ENCODE measurements at regions of chr17 and their contacts with region 1.

Region 1: DNA sequence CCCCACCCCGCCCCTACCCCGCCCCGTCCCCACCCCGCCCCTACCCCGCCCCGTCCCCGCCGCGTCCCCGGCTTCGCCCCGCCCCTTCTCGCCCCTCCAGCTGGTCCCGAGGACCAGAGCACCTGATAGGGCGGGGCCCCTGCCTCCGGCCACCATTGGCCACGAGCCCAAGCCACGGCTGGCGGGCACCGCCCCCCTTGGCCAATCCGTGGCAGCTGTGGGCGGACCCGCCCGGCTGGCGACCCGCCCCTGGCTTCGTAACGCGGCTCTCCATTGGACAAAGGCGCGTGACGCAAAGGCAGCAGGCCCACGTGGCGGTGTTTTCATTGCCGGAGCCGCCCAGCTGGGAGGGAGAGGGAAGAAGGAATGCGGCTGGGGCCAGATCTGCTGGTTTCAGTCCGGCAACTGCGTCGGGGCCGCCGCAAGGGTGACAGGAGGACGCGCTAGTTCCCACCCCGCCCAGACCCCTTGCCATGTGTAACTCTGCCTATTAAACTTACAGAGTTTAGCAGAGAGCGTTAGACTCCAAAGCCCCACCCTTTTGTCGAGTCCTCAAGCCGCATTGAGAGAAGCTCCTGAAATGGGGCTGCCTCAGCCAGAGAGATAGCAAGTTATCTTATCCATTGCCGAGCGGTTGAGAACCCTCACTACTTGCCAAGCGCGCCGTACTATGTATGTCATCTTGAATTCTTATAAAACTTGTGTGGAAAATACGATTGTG is 403 bp upstream of the WIPI1 start:
- DNase-seq: peak; percentile 99 to 100
- ATAC-seq: peak; percentile 72 to 88 (median 82)
- H3K4me3 ChIP-seq: peak overlapping the region; percentile 87
- H3K27ac ChIP-seq: peak overlapping the region; percentile 98
- H3K4me1 ChIP-seq: peaks cover 62% of the 10 kb centered on the region
- H3K27me3 ChIP-seq: no peaks in the 10 kb centered on the region
- CTCF ChIP-seq: no peak

Region 2: GRCh38 chr17:67717624-67718329 is 739.9 kb before region 1 on chr17 and contains the start of gene NOL11:
- intact Hi-C with region 1: loop called in 1 of 2 experiments (anchors 5 kb)
- DNase-seq: peak; percentile 99
- ATAC-seq: peak; percentile 99
- H3K4me3 ChIP-seq: peak within 1 kb of the TSS; percentile 80
- H3K27ac ChIP-seq: peak within 1 kb of the TSS; percentile 90
- H3K4me1 ChIP-seq: peaks cover 14% of the 10 kb centered on the region
- H3K27me3 ChIP-seq: no peaks in the 10 kb centered on the region
- CTCF ChIP-seq: peak; percentile 88
- total RNA-seq, gene NOL11: 29.9 to 37.3 (median 33.3) TPM

Region 3: GRCh38 chr17:68260051-68260762 is 197.5 kb before region 1 on chr17:
- intact Hi-C with region 1: loop called (anchors 2 to 10 kb)
- DNase-seq: no peak
- ATAC-seq: no peak
- H3K4me3 ChIP-seq: no peak overlapping the region
- H3K27ac ChIP-seq: peak overlapping the region; percentile 89
- H3K4me1 ChIP-seq: peaks cover 6% of the 10 kb centered on the region
- H3K27me3 ChIP-seq: no peaks in the 10 kb centered on the region
- CTCF ChIP-seq: no peak

Region 4: GRCh38 chr17:68386240-68387087 is 71.2 kb before region 1 on chr17:
- intact Hi-C with region 1: loop called in 1 of 2 experiments (anchors 2 kb)
- DNase-seq: peak; percentile 80 to 91
- ATAC-seq: peak; percentile 89 to 97 (median 96)
- H3K4me3 ChIP-seq: no peak overlapping the region
- H3K27ac ChIP-seq: peak overlapping the region; percentile 73
- H3K4me1 ChIP-seq: peaks cover 14% of the 10 kb centered on the region
- H3K27me3 ChIP-seq: no peaks in the 10 kb centered on the region
- CTCF ChIP-seq: no peak

Region 5: DNA sequence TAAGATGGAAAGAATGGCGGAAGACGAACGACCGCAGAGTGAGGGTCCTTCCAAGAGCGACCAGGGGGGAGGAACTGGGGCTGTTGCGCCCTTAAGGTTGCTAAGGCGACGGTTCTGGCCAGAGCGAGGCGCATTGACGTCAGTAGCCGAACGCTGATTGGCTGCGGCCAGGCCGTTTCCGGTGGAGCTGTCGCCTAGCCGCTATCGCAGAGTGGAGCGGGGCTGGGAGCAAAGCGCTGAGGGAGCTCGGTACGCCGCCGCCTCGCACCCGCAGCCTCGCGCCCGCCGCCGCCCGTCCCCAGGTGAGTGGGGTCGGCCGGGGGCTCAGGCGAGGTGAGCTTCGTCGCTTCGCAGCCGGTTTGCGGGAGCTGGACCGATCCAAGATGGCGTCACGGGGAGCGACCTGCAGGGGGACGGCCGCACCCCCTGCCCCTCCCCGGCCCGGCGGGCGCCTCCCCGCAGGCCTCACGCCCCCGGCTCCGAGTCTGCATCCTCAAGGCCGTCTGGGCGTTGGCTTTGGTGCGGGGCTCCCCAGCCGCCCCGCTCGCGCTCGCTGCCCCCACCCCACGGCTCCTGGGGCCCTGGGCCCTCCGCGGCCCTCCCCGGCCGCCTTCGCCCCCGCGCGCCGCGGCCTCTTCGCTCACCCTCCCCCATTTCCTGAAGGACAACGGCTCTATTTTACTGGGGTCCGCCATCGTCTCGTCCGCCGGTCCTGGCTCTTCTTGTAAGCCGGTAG is 54.7 kb after region 1 on chr17 and contains the start of gene PRKAR1A:
- intact Hi-C with region 1: loop called (anchors 5 kb)
- DNase-seq: peak; percentile 93 to 97
- ATAC-seq: peak; percentile 68 to 84 (median 82)
- H3K4me3 ChIP-seq: peak within 1 kb of the TSS; percentile 90
- H3K27ac ChIP-seq: peak within 1 kb of the TSS; percentile 98
- H3K4me1 ChIP-seq: peaks cover 29% of the 10 kb centered on the region
- H3K27me3 ChIP-seq: no peaks in the 10 kb centered on the region
- CTCF ChIP-seq: no peak
- total RNA-seq, gene PRKAR1A: 304 to 2,295 (median 488) TPM